SK-N-SH (cell line): ENCODE measurements at regions of chr11 and their contacts with region 1.

Region 1: DNA sequence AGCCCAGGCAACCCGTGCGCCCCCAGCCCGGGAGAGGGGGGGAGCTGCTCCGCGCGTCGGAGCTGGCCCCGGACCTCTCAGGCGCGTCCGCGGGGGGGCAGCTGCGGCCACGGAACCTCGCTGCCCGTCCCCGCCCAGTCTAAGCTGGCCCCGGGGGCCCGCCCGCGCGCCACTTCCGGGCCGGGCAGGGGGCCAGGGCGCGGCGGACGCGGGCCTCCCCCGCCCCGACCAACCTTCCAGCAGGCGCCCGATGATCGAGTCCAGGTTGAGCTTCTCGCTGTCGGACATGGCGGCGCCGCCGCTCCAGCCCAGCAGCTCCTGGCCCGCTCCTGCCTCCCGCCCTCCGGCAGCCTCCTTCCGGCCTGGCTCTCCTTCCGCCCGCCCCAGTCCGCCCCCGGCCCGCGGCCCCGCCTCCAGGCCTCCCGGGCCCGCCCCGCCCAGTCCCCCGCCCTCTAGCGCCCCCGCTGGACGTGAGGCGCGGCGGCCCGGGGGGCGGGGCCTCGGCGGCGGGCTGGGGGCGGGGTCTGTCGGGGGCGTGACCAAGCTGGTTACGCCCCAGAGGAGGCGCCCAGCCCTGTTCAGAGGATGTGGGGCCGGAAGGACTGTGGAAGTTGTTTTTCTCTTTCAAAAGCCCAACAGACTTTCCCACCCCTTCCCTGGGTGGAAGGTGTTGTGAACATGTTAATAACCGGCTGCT is at the start of gene PPP1CA:
- DNase-seq: peak; percentile 100
- H3K4me3 ChIP-seq: peak within 1 kb of the TSS; percentile 85 to 89
- H3K27ac ChIP-seq: peak within 1 kb of the TSS; percentile 81 to 91
- H3K4me1 ChIP-seq: peaks cover 9 to 17% of the 10 kb centered on the region in 2 experiments; a peak in 2 of 4 replicates
- H3K27me3 ChIP-seq: no peaks in the 10 kb centered on the region
- CTCF ChIP-seq: peak; percentile 27; the same call in 1 of the 2 replicates
- EP300 ChIP-seq: no peak
- RAD21 ChIP-seq: peak; percentile 22
- polyA plus RNA-seq, gene PPP1CA: 210 and 261 TPM in 2 replicates

Region 2: GRCh38 chr11:67353317-67354074 is 48.1 kb before region 1 on chr11 and contains the start of gene POLD4:
- CTCF ChIA-PET with region 1: interaction called, 15 read pairs
- POLR2A ChIA-PET with region 1: interaction called, 3 read pairs
- DNase-seq: peak; percentile 97
- H3K4me3 ChIP-seq: peak within 1 kb of the TSS; percentile 66 to 76
- H3K27ac ChIP-seq: peak within 1 kb of the TSS; percentile 92 to 99
- H3K4me1 ChIP-seq: peaks cover 44 to 51% of the 10 kb centered on the region in 2 experiments; a peak in 3 of 4 replicates
- H3K27me3 ChIP-seq: no peaks in the 10 kb centered on the region
- CTCF ChIP-seq: no peak
- EP300 ChIP-seq: no peak
- RAD21 ChIP-seq: no peak
- polyA plus RNA-seq, gene POLD4: 80.4 and 89.4 TPM in 2 replicates

Region 3: GRCh38 chr11:67391304-67392132 is 10.1 kb before region 1 on chr11 and contains the start of gene RAD9A:
- CTCF ChIA-PET with region 1: interaction called, 20 read pairs
- POLR2A ChIA-PET with region 1: interaction called, 32 read pairs
- DNase-seq: peak; percentile 99
- H3K4me3 ChIP-seq: peak within 1 kb of the TSS; percentile 76 to 98
- H3K27ac ChIP-seq: peak within 1 kb of the TSS; percentile 80 to 82
- H3K4me1 ChIP-seq: peaks cover 0 to 13% of the 10 kb centered on the region in 2 experiments; a peak in 1 of 4 replicates
- H3K27me3 ChIP-seq: no peaks in the 10 kb centered on the region
- CTCF ChIP-seq: no peak
- EP300 ChIP-seq: peak in 1 of 2 experiments; percentile 8; a peak in 1 of 4 replicates
- RAD21 ChIP-seq: no peak
- polyA plus RNA-seq, gene RAD9A: 21.5 and 22.3 TPM in 2 replicates

Region 4: DNA sequence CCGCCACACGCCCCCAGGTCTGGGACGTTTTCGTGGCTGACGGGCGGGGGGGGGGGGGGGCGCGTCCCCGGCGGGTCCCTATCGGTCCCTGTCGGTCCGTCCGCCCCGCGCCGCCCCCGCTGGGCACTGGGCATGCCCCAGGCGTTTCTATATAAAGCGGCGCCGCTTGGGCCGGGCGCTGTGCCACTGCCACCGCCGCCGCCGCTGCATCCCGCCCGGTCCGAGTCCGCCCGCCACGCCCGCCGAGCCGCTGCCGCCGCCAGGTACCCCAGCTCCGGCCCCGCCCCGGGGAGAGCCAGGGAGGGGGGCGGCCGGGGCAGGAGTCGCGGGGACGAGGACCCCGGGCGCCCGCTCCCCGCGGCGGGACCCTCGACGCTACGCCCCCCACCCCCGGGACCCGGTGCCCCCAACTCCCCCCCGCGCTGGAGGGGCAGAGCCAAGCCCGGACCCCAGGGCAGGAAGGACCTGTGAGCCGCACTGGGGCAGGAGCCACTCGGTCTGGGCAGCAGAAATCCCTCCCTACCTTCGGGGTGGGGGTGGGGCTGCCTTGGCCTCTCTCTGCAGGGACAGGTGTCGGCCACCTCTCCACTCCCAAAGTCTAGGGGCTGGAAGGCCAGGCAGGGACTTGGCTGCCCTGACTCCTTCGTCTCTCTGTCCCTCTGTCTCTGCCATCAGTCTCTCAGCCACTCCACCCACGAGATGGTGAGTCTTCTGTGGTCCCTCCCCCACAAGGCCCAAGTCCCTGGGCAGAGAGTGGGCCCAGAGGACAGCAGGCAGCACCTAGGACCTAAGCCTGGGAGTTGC is 14.1 kb after region 1 on chr11 and contains the start of gene CARNS1:
- CTCF ChIA-PET with region 1: interaction called, 17 read pairs
- POLR2A ChIA-PET with region 1: interaction called, 7 read pairs
- DNase-seq: no peak
- H3K4me3 ChIP-seq: peak within 1 kb of the TSS in 1 of 2 experiments; percentile 12; a peak in 1 of 4 replicates
- H3K27ac ChIP-seq: no peak within 1 kb of the TSS
- H3K4me1 ChIP-seq: peaks cover 8 to 9% of the 10 kb centered on the region in 2 experiments; a peak in 2 of 4 replicates
- H3K27me3 ChIP-seq: no peaks in the 10 kb centered on the region
- CTCF ChIP-seq: no peak
- EP300 ChIP-seq: no peak
- RAD21 ChIP-seq: no peak
- polyA plus RNA-seq, gene CARNS1: 0.15 and 0.23 TPM in 2 replicates

Region 5: GRCh38 chr11:67420646-67421420 is 19.2 kb after region 1 on chr11:
- CTCF ChIA-PET with region 1: interaction called, 17 read pairs
- POLR2A ChIA-PET with region 1: interaction called, 4 read pairs
- DNase-seq: peak; percentile 100
- H3K4me3 ChIP-seq: peak overlapping the region; percentile 63 to 66
- H3K27ac ChIP-seq: peak overlapping the region in 1 of 2 experiments; percentile 64; a peak in 1 of 4 replicates
- H3K4me1 ChIP-seq: peaks cover 6 to 8% of the 10 kb centered on the region in 2 experiments; a peak in 2 of 4 replicates
- H3K27me3 ChIP-seq: no peaks in the 10 kb centered on the region
- CTCF ChIP-seq: no peak
- EP300 ChIP-seq: no peak
- RAD21 ChIP-seq: no peak

Region 6: DNA sequence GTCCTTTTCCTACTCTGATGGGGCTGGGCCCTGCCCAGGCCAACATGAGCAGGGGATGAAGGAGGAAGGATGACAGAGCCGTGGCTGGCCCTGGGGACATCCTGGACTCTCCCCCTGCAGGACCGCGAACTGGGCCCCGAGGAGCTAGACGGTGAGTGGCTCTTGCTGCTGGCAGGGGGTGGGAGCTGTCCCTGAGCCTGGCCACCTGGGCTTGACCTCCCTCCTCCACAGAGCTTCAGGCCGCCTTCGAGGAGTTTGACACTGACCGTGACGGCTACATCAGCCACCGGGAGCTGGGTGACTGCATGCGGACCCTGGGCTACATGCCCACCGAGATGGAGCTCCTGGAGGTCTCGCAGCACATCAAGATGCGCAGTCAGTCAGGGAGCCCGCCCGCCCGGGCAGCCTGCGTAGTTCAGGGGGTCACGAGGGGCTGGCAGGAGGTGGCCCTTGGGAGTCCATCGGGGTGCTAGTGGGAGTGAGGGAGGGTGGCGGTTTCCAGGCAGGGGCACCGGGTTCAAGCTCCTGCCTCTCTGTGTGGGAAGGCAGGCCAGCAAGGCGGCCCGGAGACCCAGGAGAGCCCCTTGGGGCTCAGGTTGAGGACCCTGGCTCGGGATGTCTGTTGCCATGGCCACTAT is 54.5 kb after region 1 on chr11:
- CTCF ChIA-PET with region 1: no interaction called
- POLR2A ChIA-PET with region 1: no interaction called
- DNase-seq: no peak
- H3K4me3 ChIP-seq: no peak overlapping the region
- H3K27ac ChIP-seq: no peak overlapping the region
- H3K4me1 ChIP-seq: peaks cover 0 to 4% of the 10 kb centered on the region in 2 experiments; a peak in 1 of 4 replicates
- H3K27me3 ChIP-seq: no peaks in the 10 kb centered on the region
- CTCF ChIP-seq: no peak
- EP300 ChIP-seq: no peak
- RAD21 ChIP-seq: no peak

Region 7: DNA sequence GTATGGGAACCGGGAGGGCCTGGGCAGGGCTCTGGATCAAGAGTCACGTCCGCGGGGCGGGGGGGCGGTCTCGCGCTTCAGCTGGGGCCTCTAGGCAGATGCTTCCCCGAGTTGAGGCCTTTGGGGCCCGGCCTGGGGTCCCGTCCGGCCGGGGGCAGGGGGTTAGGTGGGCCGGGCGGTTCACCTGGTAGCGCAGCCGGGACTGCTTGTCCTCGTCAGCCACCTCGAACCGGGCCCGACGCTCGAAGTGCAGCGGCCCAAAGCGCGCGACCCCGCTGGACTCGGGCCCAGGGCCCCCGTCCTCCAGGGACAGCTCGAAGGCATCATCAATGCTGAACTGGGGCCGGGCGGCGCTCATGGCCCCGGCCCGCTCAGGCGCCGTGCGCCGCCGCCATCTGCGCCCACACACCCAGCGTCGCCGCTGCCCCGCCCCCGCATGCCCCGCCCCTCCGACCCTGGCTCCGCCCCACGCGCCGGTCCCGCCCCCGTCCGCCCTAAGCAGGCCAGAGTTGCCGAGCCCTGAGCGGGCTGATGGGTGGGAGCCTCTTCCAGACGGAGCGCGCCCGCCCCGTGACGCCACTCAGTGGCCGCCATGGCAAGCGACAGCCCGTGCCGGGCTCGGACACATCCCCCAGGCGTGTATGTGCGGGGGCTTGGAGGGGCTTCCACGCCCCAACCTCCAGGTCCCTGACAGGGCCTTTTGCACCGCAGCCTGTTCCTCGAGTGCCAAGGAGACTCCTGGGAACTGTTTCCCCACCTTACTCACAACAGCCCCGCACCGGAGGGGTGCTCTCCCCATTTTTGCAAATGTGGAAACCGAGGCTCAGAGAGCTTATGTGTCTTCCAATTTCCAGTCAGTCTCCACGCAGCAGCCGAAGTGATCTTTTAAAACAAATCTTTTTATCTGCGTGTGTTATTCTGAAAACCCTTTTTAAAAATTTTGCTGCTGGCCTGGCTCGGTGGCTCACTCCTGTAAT is 67.5 kb after region 1 on chr11 and contains the start of gene TMEM134:
- CTCF ChIA-PET with region 1: interaction called, 32 read pairs
- POLR2A ChIA-PET with region 1: interaction called, 13 read pairs
- DNase-seq: peak; percentile 98
- H3K4me3 ChIP-seq: peak within 1 kb of the TSS; percentile 73 to 90
- H3K27ac ChIP-seq: peak within 1 kb of the TSS; percentile 66 to 72; a peak in 3 of 4 replicates
- H3K4me1 ChIP-seq: peaks cover 3 to 30% of the 10 kb centered on the region in 2 experiments; a peak in 2 of 4 replicates
- H3K27me3 ChIP-seq: no peaks in the 10 kb centered on the region
- CTCF ChIP-seq: peak; percentile 50
- EP300 ChIP-seq: no peak
- RAD21 ChIP-seq: peak; percentile 58
- polyA plus RNA-seq, gene TMEM134: 132 and 135 TPM in 2 replicates

Region 8: GRCh38 chr11:67523556-67524479 is 122.2 kb after region 1 on chr11:
- CTCF ChIA-PET with region 1: no interaction called
- POLR2A ChIA-PET with region 1: no interaction called
- DNase-seq: no peak
- H3K4me3 ChIP-seq: no peak overlapping the region
- H3K27ac ChIP-seq: no peak overlapping the region
- H3K4me1 ChIP-seq: no peaks in the 10 kb centered on the region
- H3K27me3 ChIP-seq: no peaks in the 10 kb centered on the region
- CTCF ChIP-seq: no peak
- EP300 ChIP-seq: no peak
- RAD21 ChIP-seq: no peak

Region 9: GRCh38 chr11:67665541-67666362 is 264.1 kb after region 1 on chr11:
- CTCF ChIA-PET with region 1: no interaction called
- POLR2A ChIA-PET with region 1: no interaction called
- DNase-seq: peak; percentile 48
- H3K4me3 ChIP-seq: no peak overlapping the region
- H3K27ac ChIP-seq: no peak overlapping the region
- H3K4me1 ChIP-seq: no peaks in the 10 kb centered on the region
- H3K27me3 ChIP-seq: peaks cover 5% of the 10 kb centered on the region; the same call in 1 of the 2 replicates
- CTCF ChIP-seq: no peak
- EP300 ChIP-seq: no peak
- RAD21 ChIP-seq: peak; percentile 30